Heart left ventricle (tissue), 16 donors: ENCODE measurements at regions of chr11 and their contacts with region 1.

Region 1: DNA sequence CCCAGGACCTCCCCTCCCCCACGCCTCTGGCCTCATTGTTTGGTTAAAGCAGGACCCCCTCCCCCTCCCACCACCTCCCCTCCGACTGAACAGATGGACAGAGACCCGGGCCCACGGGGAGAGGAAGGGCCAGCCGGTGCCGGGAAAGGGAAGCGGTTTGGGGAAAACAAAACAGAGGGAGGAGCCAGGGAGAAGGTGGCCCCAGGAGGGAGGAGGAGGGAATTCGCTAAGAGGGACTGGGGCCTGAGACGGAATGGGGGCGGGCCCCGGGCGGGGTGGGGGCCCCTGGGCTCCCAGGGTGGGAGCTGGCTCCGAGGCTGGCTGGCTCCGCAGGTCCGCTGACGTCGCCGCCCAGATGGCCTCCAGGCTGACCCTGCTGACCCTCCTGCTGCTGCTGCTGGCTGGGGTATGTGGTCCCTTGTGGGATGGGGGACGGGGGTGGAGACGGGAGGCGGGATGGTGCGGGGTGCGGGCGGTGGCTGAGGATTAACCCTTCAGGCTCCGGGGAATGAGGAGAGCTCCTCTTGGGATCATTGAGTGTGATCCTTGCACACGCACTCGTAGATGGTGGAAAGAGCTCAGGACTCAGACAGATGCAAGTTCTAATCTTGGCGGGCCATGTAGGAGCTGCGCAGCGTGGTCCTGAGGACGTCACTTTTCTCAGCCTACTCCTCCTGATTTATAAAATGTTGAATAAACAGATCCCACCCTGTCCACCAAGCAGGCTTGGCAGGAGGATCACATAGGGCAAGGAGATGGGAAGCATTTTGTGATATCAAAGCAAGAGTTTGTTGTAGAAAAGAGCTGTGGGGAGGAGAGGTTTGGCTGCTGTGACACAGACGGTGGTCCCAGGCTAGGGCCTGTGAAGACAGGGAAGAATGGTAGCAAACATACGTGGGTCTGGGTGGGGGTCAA is 688 bp downstream of the SERPING1 start:
- DNase-seq: peak; percentile 82 to 90 (median 87)
- ATAC-seq: peak; percentile 88 to 96 (median 95)
- H3K4me3 ChIP-seq: peak overlapping the region; percentile 33 to 83 (median 60)
- H3K27ac ChIP-seq: peak overlapping the region; percentile 86 to 97 (median 89)
- H3K4me1 ChIP-seq: peaks cover 0 to 26% (median 6%) of the 10 kb centered on the region in 12 donors
- H3K27me3 ChIP-seq: peaks cover 0 to 4% (median 0%) of the 10 kb centered on the region in 9 donors
- CTCF ChIP-seq: no peak
- POLR2A ChIP-seq: no peak

Region 2: GRCh38 chr11:57638005-57638781 is 40.0 kb after region 1 on chr11:
- intact Hi-C with region 1: loop called in 1 of 10 experiments (anchors 5 kb)
- DNase-seq: peak; percentile 76 to 80 (median 79)
- ATAC-seq: peak; percentile 90 to 95 (median 92)
- H3K4me3 ChIP-seq: peak overlapping the region; percentile 40 to 97 (median 86)
- H3K27ac ChIP-seq: peak overlapping the region in 11 of 12 donors; percentile 17 to 87 (median 79)
- H3K4me1 ChIP-seq: peaks cover 0 to 33% (median 22%) of the 10 kb centered on the region in 12 donors
- H3K27me3 ChIP-seq: peaks cover 0 to 6% (median 0%) of the 10 kb centered on the region in 9 donors
- CTCF ChIP-seq: peak in 1 of 12 donors; percentile 3
- POLR2A ChIP-seq: peak in 1 of 2 donors; percentile 37

Region 3: DNA sequence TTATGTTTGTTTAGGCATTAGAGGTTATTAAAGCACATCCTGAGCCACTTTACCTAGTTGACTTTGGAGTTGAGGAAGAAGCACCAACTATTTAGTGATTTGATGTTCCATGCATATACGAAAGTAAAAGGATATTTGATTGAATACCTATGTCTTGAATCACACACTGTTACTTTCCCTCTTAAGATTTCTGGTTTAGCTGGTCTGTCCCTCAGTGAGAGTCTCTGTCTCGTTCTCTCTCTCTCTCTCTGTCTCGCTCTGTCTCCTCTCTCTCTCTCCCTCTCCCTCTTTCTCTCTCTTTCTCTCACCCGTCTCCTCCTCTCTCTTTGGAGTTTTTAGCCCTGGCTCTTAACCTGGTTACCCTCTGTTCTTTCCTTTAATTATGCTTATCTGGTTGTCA is 174.4 kb after region 1 on chr11:
- intact Hi-C with region 1: no loop called
- DNase-seq: no peak
- ATAC-seq: no peak
- H3K4me3 ChIP-seq: no peak overlapping the region
- H3K27ac ChIP-seq: peak overlapping the region in 4 of 12 donors; percentile 3 to 30 (median 16)
- H3K4me1 ChIP-seq: peaks cover 9 to 97% (median 90%) of the 10 kb centered on the region in 12 donors
- H3K27me3 ChIP-seq: no peaks in the 10 kb centered on the region
- CTCF ChIP-seq: no peak
- POLR2A ChIP-seq: no peak